OCI-LY7 (cell line): ENCODE measurements at regions of chr6 and their contacts with region 1.

Region 1: DNA sequence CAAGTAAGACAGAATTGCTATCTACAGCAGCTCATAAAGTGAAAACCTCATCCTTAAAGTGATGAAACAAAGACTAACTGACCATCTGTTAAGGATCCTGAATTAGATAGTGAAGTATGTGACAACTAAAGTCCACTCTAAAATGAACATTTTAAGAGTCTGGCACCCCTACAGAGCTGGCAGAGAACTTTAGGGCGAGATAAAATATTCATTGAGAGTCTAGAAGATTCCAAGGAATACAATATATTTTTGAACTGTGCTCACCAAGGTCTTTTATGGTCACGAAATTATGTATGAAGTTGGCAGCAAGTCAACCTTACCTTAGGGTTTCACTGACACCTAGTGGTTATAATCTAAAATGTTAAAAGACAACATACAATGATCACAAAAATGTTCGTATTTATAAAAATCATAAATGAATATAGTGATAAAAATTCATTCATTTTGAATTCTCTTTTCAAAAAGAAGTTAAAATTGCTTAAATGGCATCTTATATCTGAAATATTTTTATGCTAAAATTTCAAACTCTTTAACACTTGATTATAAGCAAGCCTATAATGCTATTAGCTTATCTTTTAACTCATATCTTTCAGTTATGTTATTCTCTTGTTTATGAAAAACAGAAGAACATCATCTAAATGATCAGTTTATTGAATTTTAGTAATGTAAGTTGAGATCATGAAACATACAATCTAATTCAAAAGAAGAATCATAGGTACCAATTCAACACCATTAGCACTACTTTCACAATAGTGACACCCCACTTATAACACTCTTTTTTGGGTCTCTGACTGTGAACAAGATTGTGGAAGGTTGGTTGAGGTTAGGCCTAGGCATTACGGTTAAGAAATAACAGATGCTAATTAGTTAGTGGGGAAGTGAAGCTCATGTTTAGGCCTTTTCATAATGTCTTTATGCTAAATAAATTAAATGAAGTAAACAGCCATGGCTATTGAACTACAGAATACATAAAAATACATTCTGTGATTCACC is 27.5 kb downstream of the RSPH3 start:
- DNase-seq: peak; percentile 77
- H3K4me3 ChIP-seq: no peak overlapping the region
- H3K27ac ChIP-seq: no peak overlapping the region
- H3K4me1 ChIP-seq: peaks cover 4% of the 10 kb centered on the region
- CTCF ChIP-seq: peak; percentile 96

Region 2: GRCh38 chr6:158220786-158221442 is 751.6 kb before region 1 on chr6:
- CTCF ChIA-PET with region 1: no interaction called
- POLR2A ChIA-PET with region 1: no interaction called
- intact Hi-C with region 1: loop called (anchors 10 kb)
- DNase-seq: peak; percentile 81
- H3K4me3 ChIP-seq: no peak overlapping the region
- H3K27ac ChIP-seq: no peak overlapping the region
- H3K4me1 ChIP-seq: no peaks in the 10 kb centered on the region
- CTCF ChIP-seq: peak; percentile 90

Region 3: GRCh38 chr6:158704181-158704822 is 268.2 kb before region 1 on chr6:
- CTCF ChIA-PET with region 1: interaction called, 3 read pairs
- POLR2A ChIA-PET with region 1: interaction called, 3 read pairs
- intact Hi-C with region 1: loop called (anchors 1 kb)
- DNase-seq: peak; percentile 85
- H3K4me3 ChIP-seq: peak overlapping the region; percentile 51
- H3K27ac ChIP-seq: no peak overlapping the region
- H3K4me1 ChIP-seq: peaks cover 30% of the 10 kb centered on the region
- CTCF ChIP-seq: peak; percentile 99

Region 4: DNA sequence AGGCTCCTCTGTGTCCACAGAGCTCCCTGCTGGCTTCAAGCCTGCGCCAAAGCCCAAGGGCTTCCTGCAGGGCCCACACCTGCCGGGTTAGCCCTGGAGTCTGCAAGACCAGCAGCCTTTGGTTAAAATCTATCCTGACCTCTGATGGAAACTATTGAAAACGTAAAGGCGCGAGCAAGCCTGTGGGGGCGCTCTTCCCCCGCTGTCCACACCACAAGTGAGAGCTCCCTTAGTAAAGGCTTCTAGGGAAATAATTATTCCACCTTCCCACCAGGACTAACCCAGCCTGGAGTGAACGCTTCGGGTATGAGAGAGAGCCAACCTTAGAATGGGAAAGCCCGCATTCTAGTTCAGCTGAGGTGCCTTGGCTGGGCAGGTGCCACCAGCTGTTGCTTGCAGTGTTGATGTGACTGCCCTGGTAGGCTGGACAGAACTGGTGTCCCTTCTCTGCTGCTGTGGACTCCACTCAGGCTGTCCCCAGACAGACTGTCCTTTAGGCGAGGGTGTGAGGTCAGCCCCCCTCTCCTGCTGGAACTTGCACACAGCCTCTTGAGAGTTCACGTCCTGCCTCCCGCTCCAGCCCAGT is 254.0 kb before region 1 on chr6:
- CTCF ChIA-PET with region 1: interaction called, 4 read pairs
- POLR2A ChIA-PET with region 1: interaction called, 7 read pairs
- intact Hi-C with region 1: loop called (anchors 1 kb)
- DNase-seq: peak; percentile 45
- H3K4me3 ChIP-seq: no peak overlapping the region
- H3K27ac ChIP-seq: no peak overlapping the region
- H3K4me1 ChIP-seq: peaks cover 41% of the 10 kb centered on the region
- CTCF ChIP-seq: peak; percentile 88

Region 5: GRCh38 chr6:158752613-158753012 is 219.9 kb before region 1 on chr6:
- CTCF ChIA-PET with region 1: no interaction called
- POLR2A ChIA-PET with region 1: interaction called, 3 read pairs
- intact Hi-C with region 1: loop called (anchors 1 kb)
- DNase-seq: peak; percentile 58
- H3K4me3 ChIP-seq: no peak overlapping the region
- H3K27ac ChIP-seq: no peak overlapping the region
- H3K4me1 ChIP-seq: peaks cover 3% of the 10 kb centered on the region
- CTCF ChIP-seq: peak; percentile 68

Region 6: DNA sequence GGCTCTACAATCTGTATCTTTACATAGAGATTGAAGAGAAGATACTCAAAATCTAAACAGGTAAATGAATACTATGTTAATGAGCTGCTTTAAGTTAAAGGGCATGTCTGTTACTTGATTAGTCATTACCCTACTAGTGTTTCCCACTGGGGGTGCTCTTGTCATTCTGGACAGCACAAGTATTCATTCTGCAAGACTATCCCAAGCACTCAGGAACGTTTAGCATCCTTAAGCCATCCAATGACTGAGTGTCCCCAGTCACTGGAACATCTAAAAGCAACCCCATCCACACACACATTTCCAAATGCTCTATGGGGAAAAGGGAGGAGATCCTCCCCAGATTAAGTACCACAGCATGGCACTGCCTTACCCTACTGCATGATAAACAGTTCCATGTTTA is 179.1 kb before region 1 on chr6:
- CTCF ChIA-PET with region 1: interaction called, 4 read pairs
- POLR2A ChIA-PET with region 1: interaction called, 3 read pairs
- intact Hi-C with region 1: loop called (anchors 1 kb)
- DNase-seq: peak; percentile 69
- H3K4me3 ChIP-seq: peak overlapping the region; percentile 2
- H3K27ac ChIP-seq: peak overlapping the region; percentile 68
- H3K4me1 ChIP-seq: peaks cover 97% of the 10 kb centered on the region
- CTCF ChIP-seq: peak; percentile 85

Region 7: GRCh38 chr6:158808941-158809678 is 163.4 kb before region 1 on chr6:
- CTCF ChIA-PET with region 1: no interaction called
- POLR2A ChIA-PET with region 1: interaction called, 4 read pairs
- intact Hi-C with region 1: loop called (anchors 5 kb)
- DNase-seq: peak; percentile 97
- H3K4me3 ChIP-seq: peak overlapping the region; percentile 87
- H3K27ac ChIP-seq: peak overlapping the region; percentile 100
- H3K4me1 ChIP-seq: peaks cover 95% of the 10 kb centered on the region
- CTCF ChIP-seq: no peak; the same call in 1 of the 2 replicates

Region 8: GRCh38 chr6:159042003-159042825 is 69.7 kb after region 1 on chr6:
- CTCF ChIA-PET with region 1: no interaction called
- POLR2A ChIA-PET with region 1: no interaction called
- intact Hi-C with region 1: no loop called
- DNase-seq: peak; percentile 91
- H3K4me3 ChIP-seq: peak overlapping the region; percentile 95
- H3K27ac ChIP-seq: peak overlapping the region; percentile 96
- H3K4me1 ChIP-seq: peaks cover 73% of the 10 kb centered on the region
- CTCF ChIP-seq: peak; percentile 100